ENCODE measurements at regions of chr19 and their contacts with region 1.

Region 1: DNA sequence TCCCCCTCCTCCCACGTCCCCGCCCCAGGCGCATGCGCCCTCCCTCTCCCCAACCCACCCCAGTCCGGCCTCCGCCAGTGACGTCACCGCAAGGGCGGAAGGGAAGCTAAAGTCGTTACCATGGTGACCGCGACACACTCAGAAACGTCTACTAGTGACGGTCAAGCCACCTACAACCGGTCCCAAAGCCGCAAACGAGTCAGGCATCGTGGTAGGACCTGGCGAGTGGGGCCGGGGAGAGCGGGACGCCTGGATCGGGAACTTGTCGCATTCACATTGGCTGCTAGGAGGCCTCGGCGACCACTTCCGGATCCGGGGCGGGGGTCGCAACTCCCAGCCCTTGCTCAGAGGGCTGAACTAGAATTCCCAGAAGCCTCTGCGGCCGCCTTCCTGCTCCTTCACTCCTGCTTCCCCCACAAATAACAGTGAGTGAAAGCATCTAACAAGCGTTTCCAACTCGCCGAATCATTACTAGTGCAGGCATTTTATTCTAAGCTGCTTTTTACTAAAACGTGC is at the start of gene ZSCAN5A:
- DNase-seq: peak; percentile 97 to 99 (median 98)
- ATAC-seq: peak; percentile 94 to 95 (median 94)
- H3K4me3 ChIP-seq: peak within 1 kb of the TSS; percentile 50 to 88 (median 70)
- H3K27ac ChIP-seq: peak within 1 kb of the TSS; percentile 88 to 99 (median 96)
- H3K4me1 ChIP-seq: peaks cover 0 to 46% (median 18%) of the 10 kb centered on the region in 12 donors
- H3K27me3 ChIP-seq: no peaks in the 10 kb centered on the region
- CTCF ChIP-seq: peak in 1 of 12 donors; percentile 9
- POLR2A ChIP-seq: no peak
- total RNA-seq, gene ZSCAN5A: 3.3 to 26.6 (median 18.1) TPM

Region 2: DNA sequence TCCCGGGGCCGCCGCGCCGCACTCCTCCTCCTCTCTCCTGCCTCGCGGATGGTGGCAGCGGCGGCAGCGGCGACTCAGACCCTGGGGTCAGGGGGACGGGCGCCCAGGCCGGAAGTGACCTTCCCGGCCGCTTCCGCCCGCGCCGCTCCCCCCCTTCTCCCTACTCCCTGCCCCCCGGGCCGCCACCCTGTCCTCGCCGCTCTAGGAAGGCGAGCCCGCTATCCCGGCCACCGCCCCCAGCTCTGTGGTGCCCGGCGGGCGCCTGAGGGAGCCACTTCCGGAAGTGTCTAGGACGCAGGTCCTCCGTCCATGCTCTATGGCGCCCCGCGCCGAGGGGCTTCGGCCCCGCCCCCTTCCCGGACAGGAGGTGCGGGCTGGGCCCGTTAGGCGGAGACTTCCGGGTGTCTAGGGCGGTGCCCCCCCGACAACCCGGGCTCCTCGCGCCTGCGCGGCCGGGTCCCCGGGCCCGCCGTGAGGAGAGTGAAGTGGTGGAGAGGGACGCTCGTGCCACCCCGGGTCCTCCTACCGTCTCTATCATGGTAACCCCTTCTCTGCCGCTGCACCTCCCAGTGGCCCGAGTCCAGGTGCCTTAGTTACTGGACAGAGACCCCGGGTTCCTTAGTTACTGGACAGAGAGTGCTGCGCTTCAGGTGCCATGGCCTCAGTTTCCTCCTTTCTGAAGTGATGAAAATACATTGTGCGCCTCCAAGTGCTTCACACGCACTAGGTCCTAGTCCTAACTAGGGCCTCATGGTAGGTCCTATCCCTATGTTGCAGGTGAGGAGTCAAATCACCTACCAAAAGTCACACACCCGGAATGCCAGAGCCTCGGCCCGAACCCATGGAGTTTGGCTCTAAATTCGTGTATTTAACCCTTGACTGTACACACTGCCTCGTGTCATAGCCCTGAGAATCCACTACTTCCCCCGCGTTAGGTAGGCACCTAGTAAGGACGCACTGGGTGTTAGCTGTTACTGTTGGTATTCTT is 193.1 kb before region 1 on chr19 and contains the start of gene ZNF787:
- intact Hi-C with region 1: loop called in 1 of 10 experiments (anchors 1 kb)
- DNase-seq: peak; percentile 98 to 100 (median 99)
- ATAC-seq: peak; percentile 94 to 95 (median 95)
- H3K4me3 ChIP-seq: peak within 1 kb of the TSS; percentile 54 to 97 (median 82)
- H3K27ac ChIP-seq: peak within 1 kb of the TSS; percentile 89 to 100 (median 95)
- H3K4me1 ChIP-seq: peaks cover 12 to 45% (median 37%) of the 10 kb centered on the region in 12 donors
- H3K27me3 ChIP-seq: no peaks in the 10 kb centered on the region
- CTCF ChIP-seq: peak in 2 of 12 donors; percentile 11 to 14
- POLR2A ChIP-seq: peak in 1 of 2 donors; percentile 53
- total RNA-seq, gene ZNF787: 11.6 to 40.8 (median 24.9) TPM

Region 3: DNA sequence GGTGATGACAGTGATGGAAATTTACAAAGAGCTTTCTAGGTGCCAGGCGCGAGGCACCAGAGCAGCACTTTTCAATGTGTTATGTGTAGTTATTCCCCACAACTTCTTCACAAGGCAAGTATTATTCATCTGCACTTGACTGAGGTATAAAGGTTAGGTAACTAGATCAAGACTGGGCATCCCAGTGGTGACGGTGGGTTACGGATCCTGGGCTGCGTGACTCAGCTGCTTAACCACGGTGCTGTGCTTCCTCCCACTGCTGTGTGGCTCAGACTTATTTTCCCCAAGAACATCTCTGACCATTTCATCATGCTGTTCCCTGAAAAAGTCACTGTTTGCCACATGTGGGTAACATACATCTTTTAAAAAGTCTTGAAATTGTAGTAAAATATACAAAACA is 22.8 kb before region 1 on chr19:
- intact Hi-C with region 1: no loop called
- DNase-seq: no peak
- ATAC-seq: no peak
- H3K4me3 ChIP-seq: no peak overlapping the region
- H3K27ac ChIP-seq: no peak overlapping the region
- H3K4me1 ChIP-seq: no peaks in the 10 kb centered on the region
- H3K27me3 ChIP-seq: no peaks in the 10 kb centered on the region
- CTCF ChIP-seq: no peak
- POLR2A ChIP-seq: no peak

Region 4: DNA sequence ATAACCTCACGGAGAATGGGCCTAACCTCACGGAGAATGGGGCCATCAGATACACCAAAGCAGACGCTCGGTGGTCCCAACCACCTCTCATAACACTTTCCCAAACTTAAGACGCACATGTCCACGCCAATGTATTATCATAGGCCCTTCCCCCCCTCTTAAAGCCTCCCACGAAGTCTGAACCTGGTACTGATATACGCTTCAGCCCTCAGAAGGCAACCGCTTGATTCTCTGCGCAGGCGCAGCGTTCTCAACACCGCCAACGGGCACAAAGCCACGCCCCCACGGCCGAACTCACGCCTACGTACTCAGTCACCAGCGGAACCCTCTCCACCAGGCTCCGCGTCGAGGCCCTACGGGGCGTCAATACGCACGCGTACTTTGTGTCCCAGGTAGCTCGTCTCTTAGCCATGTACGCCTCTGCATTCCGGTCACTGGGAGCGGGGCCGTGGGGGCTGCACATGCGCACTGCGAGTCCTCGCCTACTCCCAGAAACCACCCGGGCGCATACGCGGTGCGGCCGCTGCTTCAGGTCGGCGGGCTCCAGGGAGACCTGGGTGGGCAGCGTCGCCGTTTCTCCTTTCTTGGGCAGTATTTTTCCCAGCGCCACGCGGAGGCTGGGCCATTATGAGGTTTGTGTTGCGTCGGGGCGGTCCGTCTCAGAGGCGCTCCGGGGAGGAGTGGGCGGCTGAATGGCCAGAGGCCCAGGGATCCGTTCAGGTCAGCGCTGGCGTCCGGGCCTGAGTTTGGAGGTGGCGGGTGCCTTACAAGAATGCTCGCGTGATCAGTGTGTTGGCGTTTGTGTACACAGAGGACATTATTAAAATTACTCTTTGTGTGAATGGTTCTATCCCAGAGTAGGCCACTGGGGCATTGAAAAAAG is 53.5 kb after region 1 on chr19:
- intact Hi-C with region 1: loop called in 2 of 10 experiments (anchors 2 to 5 kb)
- DNase-seq: peak; percentile 93 to 98 (median 97)
- ATAC-seq: peak; percentile 98 to 100 (median 100)
- H3K4me3 ChIP-seq: peak overlapping the region; percentile 49 to 97 (median 74)
- H3K27ac ChIP-seq: peak overlapping the region; percentile 18 to 96 (median 90)
- H3K4me1 ChIP-seq: peaks cover 0 to 24% (median 20%) of the 10 kb centered on the region in 12 donors
- H3K27me3 ChIP-seq: no peaks in the 10 kb centered on the region
- CTCF ChIP-seq: peak in 2 of 12 donors; percentile 6 to 18
- POLR2A ChIP-seq: peak in 1 of 2 donors; percentile 75